A673 (cell line): ENCODE measurements at regions of chr2 and their contacts with region 1.

Region 1: GRCh38 chr2:223993621-223994232 is 36.5 kb downstream of the MRPL44 start:
- DNase-seq: peak; percentile 92
- H3K4me3 ChIP-seq: no peak overlapping the region
- H3K27ac ChIP-seq: peak overlapping the region; percentile 54
- H3K4me1 ChIP-seq: peaks cover 21% of the 10 kb centered on the region
- H3K27me3 ChIP-seq: no peaks in the 10 kb centered on the region
- CTCF ChIP-seq: peak; percentile 91

Region 2: DNA sequence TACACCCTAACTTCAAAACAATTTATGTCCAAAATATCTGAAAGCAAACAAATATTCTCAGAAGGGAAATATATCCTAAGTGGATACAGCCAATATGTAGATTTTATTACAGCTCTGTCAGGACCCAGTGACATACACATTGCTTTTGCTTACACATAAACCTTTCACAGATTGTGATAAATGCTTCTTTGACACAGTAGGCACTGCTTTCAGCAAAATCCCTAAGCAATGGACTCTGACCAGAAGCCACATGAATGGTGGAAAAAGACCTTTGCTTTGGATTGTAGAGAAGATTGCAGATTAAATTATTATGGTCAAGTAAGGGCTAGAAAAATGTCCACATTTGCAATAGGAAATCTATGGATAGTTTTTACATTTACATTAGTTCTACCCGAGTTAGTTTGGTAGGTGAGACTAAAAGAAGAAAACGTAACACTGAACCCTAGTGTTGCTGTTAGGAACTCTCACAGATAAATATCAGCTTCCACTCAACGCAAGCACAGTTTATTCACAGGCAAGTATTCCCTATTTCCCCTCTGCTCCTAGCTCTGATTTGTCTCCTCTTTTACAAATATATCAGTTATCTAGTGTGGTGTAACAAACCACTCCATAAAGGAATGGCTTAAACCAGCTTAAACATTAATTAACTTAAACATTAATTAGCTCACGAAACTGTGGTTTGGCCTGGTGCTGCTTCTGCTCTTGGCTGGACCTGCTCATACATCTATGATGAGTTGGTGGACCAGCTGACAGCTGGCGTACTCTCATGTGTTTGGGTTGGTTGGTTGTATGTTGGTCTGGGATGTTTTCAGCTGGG is 69.0 kb after region 1 on chr2:
- CTCF ChIA-PET with region 1: interaction called, 12 read pairs
- POLR2A ChIA-PET with region 1: no interaction called
- intact Hi-C with region 1: no loop called
- DNase-seq: no peak
- H3K4me3 ChIP-seq: no peak overlapping the region
- H3K27ac ChIP-seq: peak overlapping the region; percentile 2
- H3K4me1 ChIP-seq: peaks cover 18% of the 10 kb centered on the region
- H3K27me3 ChIP-seq: no peaks in the 10 kb centered on the region
- CTCF ChIP-seq: peak; percentile 48

Region 3: DNA sequence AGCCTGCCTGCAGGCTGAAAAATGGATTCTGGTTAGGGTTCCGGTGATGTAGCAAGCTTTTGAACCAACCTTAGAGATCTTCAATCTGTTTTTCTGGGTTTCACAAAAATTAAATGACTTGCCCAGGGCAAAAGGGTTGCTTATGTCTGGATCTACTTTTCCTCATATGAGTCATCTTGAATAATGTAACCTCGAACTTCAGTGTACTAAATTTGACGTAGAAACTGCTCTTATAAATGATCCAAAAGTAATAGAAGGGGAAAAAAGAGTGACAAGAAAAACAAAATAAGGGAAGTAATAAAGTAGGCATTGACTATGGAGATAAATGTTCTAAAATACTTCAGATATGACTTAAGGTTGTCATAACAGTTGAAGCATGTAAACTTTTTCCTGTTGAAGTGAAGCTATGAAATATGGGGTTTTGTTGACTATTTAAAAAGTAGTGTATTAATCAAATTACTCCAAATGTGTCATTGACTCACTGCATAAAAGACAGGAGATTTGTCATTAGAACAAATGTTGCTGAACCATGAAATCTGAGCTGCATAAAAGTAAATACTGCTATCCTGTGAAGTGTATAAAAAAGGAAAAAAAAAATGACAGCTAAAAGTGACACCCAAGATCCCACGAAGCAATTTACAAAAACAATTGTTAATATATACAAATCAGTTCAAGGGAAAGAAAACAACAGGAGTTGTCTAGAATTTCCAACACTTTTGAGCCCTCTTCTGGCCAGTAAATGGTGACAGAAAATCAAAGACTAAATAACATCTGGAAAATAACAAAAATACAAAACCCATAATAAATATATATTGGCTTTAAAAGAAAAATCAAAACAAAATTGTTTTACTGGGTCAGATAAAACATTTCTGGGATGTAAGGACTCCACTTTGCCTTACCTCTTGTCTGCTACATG is 148.9 kb after region 1 on chr2:
- CTCF ChIA-PET with region 1: interaction called, 10 read pairs
- POLR2A ChIA-PET with region 1: no interaction called
- intact Hi-C with region 1: loop called (anchors 1 kb)
- DNase-seq: peak; percentile 76
- H3K4me3 ChIP-seq: no peak overlapping the region
- H3K27ac ChIP-seq: peak overlapping the region; percentile 67
- H3K4me1 ChIP-seq: peaks cover 48% of the 10 kb centered on the region
- H3K27me3 ChIP-seq: no peaks in the 10 kb centered on the region
- CTCF ChIP-seq: peak; percentile 34; the same call in 1 of the 2 replicates

Region 4: DNA sequence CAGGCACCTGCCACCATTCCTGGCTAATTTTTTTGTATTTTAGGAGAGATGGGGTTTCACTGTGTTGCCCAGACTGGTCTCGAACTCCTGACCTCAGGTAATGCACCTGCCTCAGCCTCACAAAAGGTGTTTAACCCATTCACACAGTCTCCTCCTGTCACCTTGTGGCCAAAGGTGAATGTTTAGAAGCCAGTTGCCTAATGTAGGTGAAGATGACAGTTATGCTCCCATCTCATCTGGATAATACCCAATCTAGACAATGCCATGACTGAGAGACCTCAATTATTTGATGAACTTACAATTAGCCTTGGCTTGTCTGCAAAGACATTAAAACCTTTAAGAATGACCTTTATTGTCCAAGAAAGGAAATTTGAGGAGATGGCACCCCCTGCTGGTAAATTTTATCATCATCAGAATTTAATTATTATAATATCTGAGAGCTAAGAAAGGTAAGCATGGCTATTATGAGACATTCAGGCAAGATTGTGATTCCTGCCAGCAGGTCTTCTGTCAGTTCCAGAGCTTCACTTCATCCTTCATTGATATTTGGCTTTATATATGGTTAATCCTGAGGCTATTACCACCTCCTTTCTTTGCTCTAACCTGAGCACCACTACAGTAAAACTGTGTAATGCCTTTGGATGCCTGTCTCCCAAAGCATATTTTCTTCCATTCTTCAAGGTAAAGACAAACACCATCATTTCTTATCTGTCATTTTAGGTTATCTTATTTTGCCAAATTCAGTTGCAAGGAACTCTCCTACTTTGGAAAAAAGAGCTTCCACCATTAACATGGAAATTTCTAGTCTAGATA is 290.6 kb after region 1 on chr2:
- CTCF ChIA-PET with region 1: interaction called, 70 read pairs
- POLR2A ChIA-PET with region 1: no interaction called
- intact Hi-C with region 1: loop called (anchors 1 kb)
- DNase-seq: peak; percentile 75
- H3K4me3 ChIP-seq: no peak overlapping the region
- H3K27ac ChIP-seq: peak overlapping the region; percentile 15
- H3K4me1 ChIP-seq: peaks cover 48% of the 10 kb centered on the region
- H3K27me3 ChIP-seq: no peaks in the 10 kb centered on the region
- CTCF ChIP-seq: peak; percentile 68